Activated CD8-positive, alpha-beta T cell treated with anti-CD3 and anti-CD28 coated beads for 36 hours (primary cell): ENCODE measurements at regions of chr19 and their contacts with region 1.

Region 1: GRCh38 chr19:41449079-41449864 is 6.3 kb downstream of the ERICH4 start:
- DNase-seq: peak; percentile 79
- ATAC-seq: peak; percentile 96
- H3K4me3 Mint-ChIP-seq: peak overlapping the region; percentile 62
- H3K27ac Mint-ChIP-seq: no peak overlapping the region
- H3K4me1 Mint-ChIP-seq: no peaks in the 10 kb centered on the region
- H3K27me3 Mint-ChIP-seq: peaks cover 9% of the 10 kb centered on the region
- CTCF ChIP-seq: peak; percentile 97

Region 2: GRCh38 chr19:41341669-41342490 is 107.4 kb before region 1 on chr19:
- CTCF ChIA-PET with region 1: no interaction called
- POLR2A ChIA-PET with region 1: no interaction called
- intact Hi-C with region 1: no loop called
- DNase-seq: no peak
- ATAC-seq: no peak
- H3K4me3 Mint-ChIP-seq: no peak overlapping the region
- H3K27ac Mint-ChIP-seq: peak overlapping the region; percentile 69
- H3K4me1 Mint-ChIP-seq: peaks cover 34% of the 10 kb centered on the region
- H3K27me3 Mint-ChIP-seq: no peaks in the 10 kb centered on the region
- CTCF ChIP-seq: peak; percentile 14

Region 3: GRCh38 chr19:41531438-41532311 is 82.4 kb after region 1 on chr19:
- CTCF ChIA-PET with region 1: interaction called, 22 read pairs
- POLR2A ChIA-PET with region 1: interaction called, 5 read pairs
- intact Hi-C with region 1: no loop called
- DNase-seq: peak; percentile 92
- ATAC-seq: peak; percentile 75
- H3K4me3 Mint-ChIP-seq: peak overlapping the region; percentile 81
- H3K27ac Mint-ChIP-seq: peak overlapping the region; percentile 93
- H3K4me1 Mint-ChIP-seq: peaks cover 74% of the 10 kb centered on the region
- H3K27me3 Mint-ChIP-seq: peaks cover 24% of the 10 kb centered on the region
- CTCF ChIP-seq: no peak

Region 4: GRCh38 chr19:41554907-41555306 is 105.6 kb after region 1 on chr19:
- CTCF ChIA-PET with region 1: interaction called, 45 read pairs
- POLR2A ChIA-PET with region 1: no interaction called
- intact Hi-C with region 1: no loop called
- DNase-seq: no peak
- ATAC-seq: peak; percentile 39
- H3K4me3 Mint-ChIP-seq: peak overlapping the region; percentile 52
- H3K27ac Mint-ChIP-seq: peak overlapping the region; percentile 81
- H3K4me1 Mint-ChIP-seq: peaks cover 46% of the 10 kb centered on the region
- H3K27me3 Mint-ChIP-seq: no peaks in the 10 kb centered on the region
- CTCF ChIP-seq: no peak

Region 5: GRCh38 chr19:41575998-41576397 is 126.7 kb after region 1 on chr19 and contains the start of gene CEACAM21:
- CTCF ChIA-PET with region 1: interaction called, 272 read pairs
- POLR2A ChIA-PET with region 1: interaction called, 3 read pairs
- intact Hi-C with region 1: loop called (anchors 5 kb)
- DNase-seq: peak; percentile 66
- ATAC-seq: peak; percentile 98
- H3K4me3 Mint-ChIP-seq: peak within 1 kb of the TSS; percentile 57
- H3K27ac Mint-ChIP-seq: peak within 1 kb of the TSS; percentile 69
- H3K4me1 Mint-ChIP-seq: peaks cover 19% of the 10 kb centered on the region
- H3K27me3 Mint-ChIP-seq: no peaks in the 10 kb centered on the region
- CTCF ChIP-seq: no peak
- total RNA-seq, gene CEACAM21: 17.7 to 19.8 TPM